ENCODE measurements at regions of chr13 and their contacts with region 1.

Region 1: DNA sequence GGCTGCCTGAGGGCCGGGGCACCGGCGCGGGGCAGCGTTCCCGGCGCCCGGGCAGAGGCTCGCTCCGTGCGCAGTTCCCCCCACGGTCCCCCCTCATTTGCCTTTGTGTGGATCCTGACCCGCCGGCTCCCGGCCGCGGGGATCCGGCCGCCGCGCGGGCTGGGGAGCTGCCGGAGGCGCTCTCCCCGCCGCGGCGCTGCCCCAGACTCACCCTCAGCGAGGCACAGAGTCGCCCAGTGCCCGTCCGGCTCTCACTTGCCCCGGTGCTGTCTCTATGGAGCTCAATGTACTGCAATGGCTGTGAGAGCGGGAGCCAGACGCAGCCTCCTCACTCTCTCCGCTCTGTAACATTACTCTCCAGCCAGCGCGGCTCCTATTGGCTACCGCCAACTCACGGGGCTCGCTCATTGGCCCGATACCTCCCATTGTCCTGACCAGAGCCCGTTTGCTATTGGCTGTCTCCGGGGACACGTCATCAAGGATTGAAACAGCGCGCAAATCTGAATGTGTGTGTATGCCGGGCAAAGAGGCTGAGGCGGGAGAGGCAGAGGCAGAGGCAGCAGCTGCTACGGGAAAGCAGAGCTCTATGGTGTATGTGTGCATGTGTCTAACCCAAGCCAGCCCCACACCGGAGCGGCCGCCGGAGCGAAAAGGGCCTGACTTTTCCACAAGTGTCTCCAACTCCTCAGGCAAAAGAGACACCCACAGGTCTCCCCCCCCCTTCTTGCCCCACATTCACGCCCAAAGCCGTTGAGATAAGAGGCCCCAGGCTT is at the start of gene HMGB1:
- DNase-seq: peak; percentile 98
- H3K4me3 ChIP-seq: peak within 1 kb of the TSS; percentile 48 to 69 (median 66)
- H3K27ac ChIP-seq: peak within 1 kb of the TSS; percentile 85
- H3K4me1 ChIP-seq: peaks cover 25% of the 10 kb centered on the region
- H3K27me3 ChIP-seq: no peaks in the 10 kb centered on the region
- CTCF ChIP-seq: no peak
- POLR2A ChIP-seq: peak; percentile 80
- total RNA-seq, gene HMGB1: 670 and 675 TPM in 2 replicates

Region 2: DNA sequence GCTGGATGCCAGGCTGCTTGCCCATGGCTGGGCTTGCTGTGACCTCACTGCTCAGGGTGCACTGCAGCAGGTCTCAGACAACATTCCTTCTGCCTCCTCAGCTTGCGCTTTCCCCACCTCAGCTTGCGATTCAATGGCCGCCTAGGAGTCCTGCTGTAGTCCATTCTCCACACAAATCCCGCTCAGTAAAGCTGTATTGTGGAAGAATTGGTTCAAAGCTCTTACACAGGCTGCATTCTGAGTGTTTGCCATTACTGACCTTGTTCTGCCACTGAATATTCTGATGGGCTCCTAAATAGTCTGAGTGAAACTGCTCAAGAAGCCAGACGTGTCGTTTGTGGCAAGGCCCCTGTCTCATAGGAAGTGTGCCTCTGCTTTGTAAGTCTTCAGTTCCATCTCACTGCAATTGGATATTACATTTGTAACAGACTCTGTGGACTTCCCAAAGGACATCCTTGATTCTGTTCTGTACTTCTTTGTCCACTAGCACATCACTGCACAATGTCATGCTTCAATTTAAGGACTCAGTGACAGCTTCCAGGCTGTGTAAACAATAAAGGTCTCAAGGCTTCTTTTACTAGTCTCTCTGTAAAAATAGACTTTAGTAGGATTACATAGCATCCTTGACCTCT is 208.2 kb before region 1 on chr13:
- CTCF ChIA-PET with region 1: no interaction called
- POLR2A ChIA-PET with region 1: no interaction called
- dilution Hi-C with region 1: no loop called
- intact Hi-C with region 1: loop called (anchors 10 kb)
- DNase-seq: no peak
- H3K4me3 ChIP-seq: no peak overlapping the region
- H3K27ac ChIP-seq: no peak overlapping the region
- H3K4me1 ChIP-seq: no peaks in the 10 kb centered on the region
- H3K27me3 ChIP-seq: no peaks in the 10 kb centered on the region
- CTCF ChIP-seq: no peak
- POLR2A ChIP-seq: no peak

Region 3: DNA sequence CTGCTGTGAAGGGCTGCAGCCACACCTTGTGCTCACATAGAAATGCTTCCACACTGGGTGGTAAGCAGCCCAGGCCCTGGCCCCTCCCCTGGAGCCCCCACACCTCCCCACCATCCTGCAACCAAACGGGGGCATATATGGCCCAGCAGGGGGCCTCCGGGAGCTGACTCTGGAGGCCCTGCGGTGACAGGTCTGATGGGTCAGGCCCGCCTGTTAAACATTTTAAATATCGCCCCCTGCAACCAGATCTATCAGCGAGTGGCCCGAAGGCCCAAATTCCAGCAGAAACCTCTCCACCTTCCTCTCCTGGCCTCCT is 110.4 kb before region 1 on chr13:
- CTCF ChIA-PET with region 1: no interaction called
- POLR2A ChIA-PET with region 1: no interaction called
- dilution Hi-C with region 1: no loop called
- intact Hi-C with region 1: loop called (anchors 2 kb)
- DNase-seq: peak; percentile 37
- H3K4me3 ChIP-seq: no peak overlapping the region
- H3K27ac ChIP-seq: no peak overlapping the region
- H3K4me1 ChIP-seq: no peaks in the 10 kb centered on the region
- H3K27me3 ChIP-seq: no peaks in the 10 kb centered on the region
- CTCF ChIP-seq: peak; percentile 43 to 72
- POLR2A ChIP-seq: no peak

Region 4: GRCh38 chr13:30408319-30409101 is 57.3 kb before region 1 on chr13:
- CTCF ChIA-PET with region 1: no interaction called
- POLR2A ChIA-PET with region 1: no interaction called
- dilution Hi-C with region 1: no loop called
- intact Hi-C with region 1: loop called (anchors 1 kb)
- DNase-seq: peak; percentile 94
- H3K4me3 ChIP-seq: no peak overlapping the region
- H3K27ac ChIP-seq: no peak overlapping the region
- H3K4me1 ChIP-seq: peaks cover 3% of the 10 kb centered on the region
- H3K27me3 ChIP-seq: peaks cover 0 to 7% of the 10 kb centered on the region in 2 experiments
- CTCF ChIP-seq: peak; percentile 59 to 83
- POLR2A ChIP-seq: peak; percentile 34

Region 5: GRCh38 chr13:30510811-30511371 is 45.1 kb after region 1 on chr13:
- CTCF ChIA-PET with region 1: no interaction called
- POLR2A ChIA-PET with region 1: no interaction called
- dilution Hi-C with region 1: no loop called
- intact Hi-C with region 1: no loop called
- DNase-seq: no peak
- H3K4me3 ChIP-seq: no peak overlapping the region
- H3K27ac ChIP-seq: no peak overlapping the region
- H3K4me1 ChIP-seq: no peaks in the 10 kb centered on the region
- H3K27me3 ChIP-seq: peaks cover 0 to 2% of the 10 kb centered on the region in 2 experiments
- CTCF ChIP-seq: no peak
- POLR2A ChIP-seq: no peak

Region 6: GRCh38 chr13:30617315-30618185 is 151.8 kb after region 1 on chr13 and contains the start of gene USPL1:
- CTCF ChIA-PET with region 1: interaction called, 3 read pairs
- POLR2A ChIA-PET with region 1: interaction called, 3 read pairs
- dilution Hi-C with region 1: no loop called
- intact Hi-C with region 1: loop called (anchors 1 kb)
- DNase-seq: peak; percentile 100
- H3K4me3 ChIP-seq: peak within 1 kb of the TSS; percentile 83 to 95 (median 95)
- H3K27ac ChIP-seq: peak within 1 kb of the TSS; percentile 87
- H3K4me1 ChIP-seq: peaks cover 36% of the 10 kb centered on the region
- H3K27me3 ChIP-seq: no peaks in the 10 kb centered on the region
- CTCF ChIP-seq: peak in 1 of 2 donors; percentile 31
- POLR2A ChIP-seq: no peak
- total RNA-seq, gene USPL1: 18.8 and 21.0 TPM in 2 replicates